Gastrocnemius medialis (tissue), 4 donors: ENCODE measurements at regions of chr17 and their contacts with region 1.

Region 1: DNA sequence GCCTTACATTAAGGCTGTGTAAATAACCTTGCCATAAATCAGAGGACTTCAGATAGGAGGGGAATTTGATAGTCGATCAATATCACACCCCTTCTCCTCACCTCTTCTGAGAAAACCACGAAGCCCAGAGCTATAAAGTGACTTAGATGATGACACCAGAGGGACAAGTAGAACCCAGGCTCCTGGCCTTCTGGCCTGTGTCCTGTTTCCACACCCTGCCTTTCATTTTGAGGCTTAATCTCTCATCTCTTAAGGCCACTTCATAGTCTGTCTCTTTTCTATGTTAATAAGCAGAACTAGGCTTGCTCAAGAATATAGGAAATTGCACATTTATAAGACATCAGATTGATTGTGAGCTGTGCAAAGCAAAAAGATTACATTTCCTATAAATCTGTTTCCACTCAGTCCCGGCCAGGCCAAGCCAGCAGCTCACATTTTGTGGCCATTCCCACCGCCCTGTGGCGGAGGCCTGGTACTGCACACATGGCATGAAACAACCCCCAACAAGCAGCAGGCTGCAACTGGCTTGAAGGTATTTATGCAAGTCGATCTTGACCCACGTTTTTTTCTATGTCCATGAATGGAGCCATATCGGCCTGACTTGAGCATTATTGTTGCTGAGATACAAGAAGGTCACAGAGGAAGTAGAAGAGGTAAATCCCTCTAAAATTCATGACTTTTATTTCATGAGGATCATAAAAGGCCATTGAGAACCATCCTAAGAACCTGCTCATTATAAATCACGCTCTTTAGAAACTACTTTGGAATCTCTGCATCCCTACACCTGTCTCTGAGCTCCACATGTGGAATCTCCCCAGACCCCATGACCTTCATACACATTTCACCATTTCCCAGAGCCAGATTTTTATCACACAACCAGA is 93.7 kb downstream of the PMP22 start:
- DNase-seq: peak; percentile 9 to 25
- ATAC-seq: no peak
- H3K4me3 ChIP-seq: no peak overlapping the region
- H3K27ac ChIP-seq: no peak overlapping the region
- H3K4me1 ChIP-seq: no peaks in the 10 kb centered on the region
- H3K27me3 ChIP-seq: no peaks in the 10 kb centered on the region
- CTCF ChIP-seq: peak; percentile 39 to 71 (median 50)
- POLR2A ChIP-seq: no peak

Region 2: DNA sequence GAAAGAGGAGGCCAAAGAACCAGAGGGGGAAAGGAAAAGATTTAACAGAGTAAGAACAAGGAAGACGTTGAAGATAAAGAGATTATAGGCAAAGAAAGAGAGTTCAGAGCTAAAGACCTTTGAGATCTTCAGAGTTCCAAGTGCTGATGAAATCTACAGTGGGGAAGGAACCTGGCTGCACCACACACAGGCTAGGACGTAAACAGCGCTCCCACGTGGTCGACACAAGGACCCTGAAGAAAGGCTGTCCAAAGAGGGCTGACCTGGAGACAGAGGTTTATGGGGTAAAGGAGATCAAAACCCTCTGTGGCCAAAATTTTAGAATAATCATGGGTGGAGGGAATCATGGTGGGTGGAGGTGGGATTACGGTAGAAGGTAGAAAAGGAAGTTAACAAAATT is 27.9 kb before region 1 on chr17:
- in situ Hi-C with region 1: no loop called
- intact Hi-C with region 1: loop called (anchors 1 kb)
- DNase-seq: no peak
- ATAC-seq: no peak
- H3K4me3 ChIP-seq: no peak overlapping the region
- H3K27ac ChIP-seq: no peak overlapping the region
- H3K4me1 ChIP-seq: no peaks in the 10 kb centered on the region
- H3K27me3 ChIP-seq: no peaks in the 10 kb centered on the region
- CTCF ChIP-seq: no peak
- POLR2A ChIP-seq: no peak